Cardiac septum (tissue), 1 donor: ENCODE measurements at regions of chr18 and their contacts with region 1.

Region 1: DNA sequence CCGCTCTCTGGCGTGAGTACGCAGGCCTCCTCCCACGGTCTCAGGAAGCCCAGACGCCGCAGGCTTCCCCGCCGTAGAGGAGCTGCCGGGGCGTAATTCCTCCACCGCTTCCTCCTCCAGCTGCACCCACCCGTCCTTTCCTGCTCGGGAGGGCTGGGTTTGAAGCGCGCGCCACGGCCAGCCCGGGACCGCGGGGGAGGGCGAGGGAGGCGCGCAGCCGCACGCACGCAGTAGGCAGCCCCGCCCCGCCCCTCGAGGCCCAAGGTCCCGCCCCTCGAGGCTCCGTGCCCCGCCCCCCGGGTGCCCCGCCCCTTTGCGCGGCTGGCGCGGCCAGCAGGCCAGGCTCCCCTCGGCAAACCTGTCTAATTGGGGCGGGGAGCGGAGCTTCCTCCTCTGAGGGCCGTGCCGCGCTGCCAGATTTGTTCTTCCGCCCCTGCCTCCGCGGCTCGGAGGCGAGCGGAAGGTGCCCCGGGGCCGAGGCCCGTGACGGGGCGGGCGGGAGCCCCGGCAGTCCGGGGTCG is at the start of gene MALT1:
- DNase-seq: peak; percentile 98
- total RNA-seq, gene MALT1: 12.8 TPM

Region 2: DNA sequence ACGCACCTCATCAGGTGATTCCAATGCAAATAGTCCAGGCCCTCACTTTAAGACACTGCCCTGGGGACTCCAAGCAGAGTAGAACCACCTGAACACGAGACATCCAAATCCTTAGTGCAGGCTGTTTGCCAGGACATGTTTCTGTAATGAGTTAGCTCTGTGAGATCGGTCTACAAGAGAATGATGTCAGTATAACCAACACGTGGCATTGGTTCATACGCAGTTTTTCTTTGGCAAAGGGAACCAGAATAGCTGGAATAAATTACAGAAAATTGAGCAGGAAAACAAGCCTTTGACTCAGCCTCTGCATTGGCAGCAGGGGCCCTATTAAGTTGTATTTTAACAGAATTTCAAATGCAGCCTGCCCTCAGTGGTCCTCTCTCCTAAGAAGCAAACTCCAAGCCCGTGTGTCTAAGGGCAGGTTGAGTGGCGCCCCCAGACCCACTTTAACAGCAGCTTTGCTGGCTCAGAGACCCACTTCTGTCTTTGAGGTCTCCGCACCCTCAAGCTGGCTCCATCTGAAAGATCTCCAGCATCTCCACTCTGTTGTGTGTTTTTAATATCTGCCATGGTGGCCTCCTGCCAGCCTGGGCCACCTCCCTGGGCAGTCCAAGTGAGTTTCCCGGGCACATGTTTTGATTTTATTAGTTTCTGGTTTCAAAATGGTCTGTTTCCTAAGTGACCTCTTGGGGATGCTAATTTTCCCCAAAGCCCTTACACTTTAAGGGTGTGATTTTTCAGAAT is 103.5 kb before region 1 on chr18:
- intact Hi-C with region 1: no loop called
- DNase-seq: no peak

Region 3: GRCh38 chr18:58639751-58640427 is 31.3 kb before region 1 on chr18:
- intact Hi-C with region 1: loop called (anchors 5 kb)
- DNase-seq: no peak

Region 4: GRCh38 chr18:58748899-58749595 is 77.9 kb after region 1 on chr18:
- intact Hi-C with region 1: no loop called
- DNase-seq: no peak

Region 5: GRCh38 chr18:58761241-58761969 is 90.2 kb after region 1 on chr18:
- intact Hi-C with region 1: loop called (anchors 5 kb)
- DNase-seq: no peak